ENCODE measurements at regions of chr6 and their contacts with region 1.

Region 1: DNA sequence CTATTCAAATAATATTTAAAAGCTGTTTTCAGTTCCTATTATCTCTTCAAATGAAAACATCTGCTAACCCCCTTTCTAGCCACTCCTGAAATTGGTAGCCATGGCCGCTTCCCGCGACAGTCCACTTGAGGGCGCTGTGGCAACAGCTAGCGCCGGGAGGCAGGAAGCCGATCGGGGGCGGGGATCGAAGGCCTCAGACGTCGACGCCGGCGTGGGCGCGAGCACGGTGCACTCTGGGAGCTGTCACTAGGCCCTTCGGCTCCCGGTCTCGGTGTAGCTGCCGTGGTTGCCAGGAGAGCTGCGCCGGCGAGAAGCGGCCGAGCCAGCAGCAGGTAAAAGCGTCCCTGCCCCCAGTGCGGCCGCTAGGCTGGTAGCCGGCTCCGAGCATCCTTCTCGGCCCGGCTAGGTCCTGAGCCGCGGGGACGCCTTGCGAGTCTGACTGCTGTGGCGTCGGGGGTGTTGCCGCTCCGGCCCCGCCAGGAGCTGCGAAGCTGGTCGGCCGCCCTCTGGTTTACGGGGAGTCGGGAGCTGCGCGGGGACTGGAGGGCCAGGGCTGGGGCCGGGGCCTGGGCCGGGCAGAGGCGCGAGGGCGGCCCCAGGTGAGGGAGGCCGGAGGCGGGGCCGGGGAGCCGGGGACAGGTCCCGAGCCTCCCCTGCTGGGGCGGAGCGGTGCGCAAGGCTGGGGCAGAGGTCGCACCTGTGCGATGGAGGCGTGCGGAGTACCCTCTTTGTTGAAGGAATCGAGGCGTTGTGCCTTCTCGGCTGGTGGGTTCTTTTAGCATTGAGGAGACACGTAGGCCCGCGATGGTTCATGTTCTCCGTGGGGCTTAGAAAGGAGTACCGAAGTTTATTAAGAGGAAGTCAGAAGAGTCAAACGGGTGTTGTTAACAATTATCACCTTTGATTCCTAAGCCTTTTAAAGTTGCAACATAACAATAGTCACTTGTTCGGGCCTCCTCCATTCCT is at the start of gene DOP1A:
- DNase-seq: peak; percentile 91
- H3K4me3 ChIP-seq: peak within 1 kb of the TSS; percentile 92 to 96 (median 94)
- H3K27ac ChIP-seq: peak within 1 kb of the TSS; percentile 65
- H3K4me1 ChIP-seq: peaks cover 34% of the 10 kb centered on the region
- H3K27me3 ChIP-seq: no peaks in the 10 kb centered on the region
- CTCF ChIP-seq: peak; percentile 91 to 98
- total RNA-seq, gene DOP1A: 24.3 to 74.3 TPM

Region 2: DNA sequence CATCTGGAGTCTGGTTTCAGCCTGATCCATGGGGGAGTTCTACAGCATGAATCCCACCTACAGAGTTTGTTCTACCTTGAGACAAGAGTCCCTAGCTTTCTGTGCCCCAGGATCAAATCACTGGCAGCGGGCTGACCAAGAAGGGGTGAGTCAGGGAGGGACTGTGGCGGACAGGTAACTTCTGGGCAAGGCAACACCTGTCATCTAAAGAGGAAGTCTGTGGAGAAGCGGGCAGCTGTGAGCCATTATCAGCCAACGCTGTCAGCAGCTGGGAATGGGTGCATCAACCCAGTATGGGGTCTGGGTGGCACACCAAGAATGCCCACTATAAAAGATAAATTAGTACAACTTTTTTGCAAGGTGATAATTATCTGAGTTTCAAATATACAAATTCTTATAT is 48.0 kb before region 1 on chr6:
- CTCF ChIA-PET with region 1: no interaction called
- dilution Hi-C with region 1: no loop called
- in situ Hi-C with region 1: no loop called
- intact Hi-C with region 1: no loop called
- DNase-seq: no peak
- H3K4me3 ChIP-seq: no peak overlapping the region
- H3K27ac ChIP-seq: no peak overlapping the region
- H3K4me1 ChIP-seq: no peaks in the 10 kb centered on the region
- H3K27me3 ChIP-seq: no peaks in the 10 kb centered on the region
- CTCF ChIP-seq: no peak

Region 3: GRCh38 chr6:83042467-83043053 is 25.2 kb before region 1 on chr6:
- CTCF ChIA-PET with region 1: interaction called, 16 read pairs
- dilution Hi-C with region 1: no loop called
- in situ Hi-C with region 1: no loop called
- intact Hi-C with region 1: no loop called
- DNase-seq: no peak
- H3K4me3 ChIP-seq: no peak overlapping the region
- H3K27ac ChIP-seq: no peak overlapping the region
- H3K4me1 ChIP-seq: peaks cover 8% of the 10 kb centered on the region
- H3K27me3 ChIP-seq: no peaks in the 10 kb centered on the region
- CTCF ChIP-seq: no peak

Region 4: DNA sequence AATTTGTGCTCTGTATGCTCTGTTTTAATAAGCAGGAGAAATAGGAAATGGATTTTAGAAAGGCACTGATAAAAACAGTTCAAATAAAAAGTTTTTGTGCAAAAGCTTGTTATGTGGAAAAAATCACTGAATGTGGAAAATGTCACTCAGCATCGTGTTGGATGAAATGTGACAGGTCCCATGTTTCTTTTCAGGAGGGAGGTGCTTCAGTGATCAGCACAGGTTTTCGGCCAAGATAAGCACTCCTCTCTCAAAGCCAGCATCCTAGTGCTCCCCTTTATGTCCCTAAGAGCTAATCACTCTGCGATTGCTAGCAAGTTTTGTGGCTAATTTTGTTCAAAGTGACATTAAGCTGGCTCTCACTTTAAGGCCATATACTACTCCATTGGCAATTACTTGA is 14.1 kb before region 1 on chr6:
- CTCF ChIA-PET with region 1: no interaction called
- dilution Hi-C with region 1: no loop called
- in situ Hi-C with region 1: no loop called
- intact Hi-C with region 1: no loop called
- DNase-seq: no peak
- H3K4me3 ChIP-seq: no peak overlapping the region
- H3K27ac ChIP-seq: no peak overlapping the region
- H3K4me1 ChIP-seq: no peaks in the 10 kb centered on the region
- H3K27me3 ChIP-seq: no peaks in the 10 kb centered on the region
- CTCF ChIP-seq: no peak

Region 5: GRCh38 chr6:83169511-83169910 is 101.8 kb after region 1 on chr6:
- CTCF ChIA-PET with region 1: no interaction called
- dilution Hi-C with region 1: no loop called
- in situ Hi-C with region 1: no loop called
- intact Hi-C with region 1: loop called (anchors 5 kb)
- DNase-seq: no peak
- H3K4me3 ChIP-seq: no peak overlapping the region
- H3K27ac ChIP-seq: no peak overlapping the region
- H3K4me1 ChIP-seq: no peaks in the 10 kb centered on the region
- H3K27me3 ChIP-seq: no peaks in the 10 kb centered on the region
- CTCF ChIP-seq: no peak

Region 6: DNA sequence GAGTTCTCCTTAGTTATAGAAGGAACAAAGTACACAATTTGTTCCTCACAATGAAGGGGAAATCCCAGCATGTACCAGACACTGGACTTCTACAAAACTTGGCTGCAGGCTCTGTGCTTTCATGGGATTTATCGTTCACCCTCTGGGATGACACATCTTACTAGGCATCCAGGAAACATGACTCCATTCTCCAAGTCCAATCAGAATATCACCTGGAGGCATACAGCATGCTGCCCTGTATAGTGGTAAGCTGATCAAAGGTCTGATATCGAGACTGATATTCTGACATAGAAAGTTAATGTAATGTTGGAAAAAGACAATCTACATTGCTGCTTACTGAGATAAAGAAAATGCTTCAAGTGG is 132.1 kb after region 1 on chr6:
- CTCF ChIA-PET with region 1: interaction called, 4 read pairs
- dilution Hi-C with region 1: no loop called
- in situ Hi-C with region 1: loop called in 1 of 2 experiments (anchors 10 kb)
- intact Hi-C with region 1: no loop called
- DNase-seq: peak; percentile 92
- H3K4me3 ChIP-seq: no peak overlapping the region
- H3K27ac ChIP-seq: peak overlapping the region; percentile 24
- H3K4me1 ChIP-seq: peaks cover 17% of the 10 kb centered on the region
- H3K27me3 ChIP-seq: no peaks in the 10 kb centered on the region
- CTCF ChIP-seq: no peak

Region 7: DNA sequence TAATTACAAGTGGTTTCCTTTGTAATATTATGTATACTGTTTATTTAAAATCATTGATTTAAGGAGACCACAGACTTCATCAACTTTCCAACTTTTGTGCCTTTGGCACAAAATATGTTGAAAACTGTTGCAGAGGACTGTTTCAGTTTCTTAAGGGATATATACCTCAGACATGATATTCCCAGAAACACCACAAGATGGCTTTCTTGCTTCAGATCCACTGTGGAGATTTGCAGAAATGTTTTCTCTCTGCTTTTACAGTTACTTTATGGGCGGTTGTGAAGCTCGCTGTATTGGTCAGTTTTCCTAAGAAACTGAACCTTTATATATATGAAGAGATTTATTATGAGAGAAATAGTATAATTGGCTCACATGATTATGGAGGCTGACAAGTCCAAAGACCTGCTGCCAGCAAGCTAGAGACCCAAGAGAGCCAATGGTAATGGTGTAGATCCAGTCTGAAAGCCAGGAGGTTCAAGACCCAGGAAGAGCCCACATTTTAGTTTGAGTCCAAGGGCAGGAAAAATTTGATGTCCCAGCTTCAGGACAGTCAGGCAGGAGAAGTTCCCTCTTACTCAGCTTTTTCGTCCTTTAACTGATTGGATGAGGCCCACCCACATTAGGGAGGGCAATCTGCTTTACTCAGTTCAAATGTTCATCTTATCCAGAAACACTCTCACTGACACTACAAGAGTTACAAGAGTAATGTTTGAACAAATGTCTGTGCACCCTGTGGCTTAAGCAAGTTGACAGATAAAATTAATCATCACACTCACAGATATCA is 350.3 kb after region 1 on chr6:
- CTCF ChIA-PET with region 1: no interaction called
- dilution Hi-C with region 1: no loop called
- in situ Hi-C with region 1: no loop called
- intact Hi-C with region 1: loop called (anchors 5 kb)
- DNase-seq: peak; percentile 38
- H3K4me3 ChIP-seq: no peak overlapping the region
- H3K27ac ChIP-seq: no peak overlapping the region
- H3K4me1 ChIP-seq: no peaks in the 10 kb centered on the region
- H3K27me3 ChIP-seq: no peaks in the 10 kb centered on the region
- CTCF ChIP-seq: peak; percentile 51 to 76

Region 8: GRCh38 chr6:83514866-83515466 is 447.2 kb after region 1 on chr6:
- CTCF ChIA-PET with region 1: interaction called, 13 read pairs
- dilution Hi-C with region 1: no loop called
- in situ Hi-C with region 1: loop called (anchors 10 to 25 kb)
- intact Hi-C with region 1: loop called (anchors 1 kb)
- DNase-seq: peak; percentile 48
- H3K4me3 ChIP-seq: no peak overlapping the region
- H3K27ac ChIP-seq: no peak overlapping the region
- H3K4me1 ChIP-seq: peaks cover 4% of the 10 kb centered on the region
- H3K27me3 ChIP-seq: no peaks in the 10 kb centered on the region
- CTCF ChIP-seq: peak; percentile 73 to 81